Endothelial cell of umbilical vein (primary cell): ENCODE measurements at regions of chr9 and their contacts with region 1.

Region 1: GRCh38 chr9:77221431-77221830 is 44.1 kb downstream of the VPS13A start:
- DNase-seq: no peak
- H3K4me3 ChIP-seq: no peak overlapping the region
- H3K27ac ChIP-seq: no peak overlapping the region
- H3K4me1 ChIP-seq: no peaks in the 10 kb centered on the region
- H3K27me3 ChIP-seq: no peaks in the 10 kb centered on the region
- CTCF ChIP-seq: no peak
- POLR2A ChIP-seq: no peak

Region 2: DNA sequence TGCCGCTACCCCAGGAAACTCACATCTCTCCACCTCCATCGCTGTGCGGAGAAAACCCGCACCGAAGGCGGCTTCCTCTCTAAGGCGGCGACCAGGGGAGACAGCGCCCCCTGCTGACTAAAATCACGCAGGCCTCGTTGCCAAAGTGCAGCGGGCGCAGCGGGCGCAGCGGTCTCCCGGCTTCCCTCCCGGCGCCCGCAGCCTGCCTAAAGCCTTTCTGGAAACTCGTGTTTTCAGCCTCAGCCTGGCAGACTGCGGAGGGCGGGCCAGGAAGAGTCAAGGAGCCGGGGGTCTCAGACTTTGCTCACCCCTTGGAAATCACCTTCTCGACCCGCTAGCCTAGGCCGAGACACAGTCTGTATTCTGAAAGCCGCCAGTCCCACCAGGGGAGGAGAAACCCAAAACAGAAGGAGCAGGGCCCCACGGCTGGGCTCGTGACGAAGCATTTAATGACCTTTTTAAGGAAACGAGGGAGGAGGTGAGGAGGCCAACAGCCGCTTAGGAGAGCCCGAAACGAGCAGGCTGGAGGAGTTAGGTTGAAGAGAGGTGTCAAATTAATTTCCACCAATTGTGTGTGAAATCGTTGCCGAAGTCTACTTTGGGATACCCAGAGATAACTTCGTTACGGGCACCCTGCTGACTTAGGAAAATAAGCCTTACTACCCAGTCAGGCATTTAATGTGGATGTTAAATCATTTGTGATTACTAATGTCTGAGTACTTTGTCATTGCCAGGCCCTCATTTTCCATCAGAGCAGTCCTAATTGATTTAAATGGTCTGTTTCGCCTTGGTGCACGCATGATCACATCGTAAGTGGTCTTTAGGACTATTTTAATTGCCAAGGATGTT is 209.2 kb before region 1 on chr9:
- CTCF ChIA-PET with region 1: no interaction called
- POLR2A ChIA-PET with region 1: no interaction called
- dilution Hi-C with region 1: no loop called
- intact Hi-C with region 1: no loop called
- DNase-seq: peak; percentile 54
- H3K4me3 ChIP-seq: no peak overlapping the region
- H3K27ac ChIP-seq: no peak overlapping the region
- H3K4me1 ChIP-seq: peaks cover 7% of the 10 kb centered on the region
- H3K27me3 ChIP-seq: peaks cover 70 to 91% of the 10 kb centered on the region in 2 experiments
- CTCF ChIP-seq: peak; percentile 87 to 90
- POLR2A ChIP-seq: no peak

Region 3: GRCh38 chr9:77194423-77194822 is 27.0 kb before region 1 on chr9:
- CTCF ChIA-PET with region 1: no interaction called
- POLR2A ChIA-PET with region 1: no interaction called
- dilution Hi-C with region 1: no loop called
- intact Hi-C with region 1: loop called (anchors 1 kb)
- DNase-seq: no peak
- H3K4me3 ChIP-seq: no peak overlapping the region
- H3K27ac ChIP-seq: no peak overlapping the region
- H3K4me1 ChIP-seq: no peaks in the 10 kb centered on the region
- H3K27me3 ChIP-seq: no peaks in the 10 kb centered on the region
- CTCF ChIP-seq: no peak
- POLR2A ChIP-seq: no peak

Region 4: DNA sequence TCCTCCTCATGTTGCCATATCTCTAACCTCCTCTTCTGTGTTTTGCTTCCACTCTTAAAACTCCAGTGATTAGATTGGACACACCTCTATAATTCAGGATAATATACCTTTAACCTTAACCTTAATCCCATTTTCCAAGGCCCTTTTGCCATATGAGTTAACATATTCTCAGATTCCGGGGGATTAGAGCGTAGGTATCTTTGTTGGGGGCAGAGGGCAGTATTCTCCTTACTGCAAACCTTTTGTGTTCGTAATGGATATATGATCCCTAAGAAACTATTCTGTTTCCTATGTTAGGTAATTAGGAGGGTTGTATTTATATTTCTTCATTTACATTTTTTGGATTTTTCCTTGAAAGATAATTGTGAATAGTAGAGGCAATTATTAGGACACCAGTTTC is 55.4 kb after region 1 on chr9:
- CTCF ChIA-PET with region 1: no interaction called
- POLR2A ChIA-PET with region 1: no interaction called
- dilution Hi-C with region 1: no loop called
- intact Hi-C with region 1: no loop called
- DNase-seq: no peak
- H3K4me3 ChIP-seq: no peak overlapping the region
- H3K27ac ChIP-seq: no peak overlapping the region
- H3K4me1 ChIP-seq: no peaks in the 10 kb centered on the region
- H3K27me3 ChIP-seq: no peaks in the 10 kb centered on the region
- CTCF ChIP-seq: no peak
- POLR2A ChIP-seq: no peak